Esophagus muscularis mucosa (tissue), 4 donors: ENCODE measurements at regions of chr7 and their contacts with region 1.

Region 1: DNA sequence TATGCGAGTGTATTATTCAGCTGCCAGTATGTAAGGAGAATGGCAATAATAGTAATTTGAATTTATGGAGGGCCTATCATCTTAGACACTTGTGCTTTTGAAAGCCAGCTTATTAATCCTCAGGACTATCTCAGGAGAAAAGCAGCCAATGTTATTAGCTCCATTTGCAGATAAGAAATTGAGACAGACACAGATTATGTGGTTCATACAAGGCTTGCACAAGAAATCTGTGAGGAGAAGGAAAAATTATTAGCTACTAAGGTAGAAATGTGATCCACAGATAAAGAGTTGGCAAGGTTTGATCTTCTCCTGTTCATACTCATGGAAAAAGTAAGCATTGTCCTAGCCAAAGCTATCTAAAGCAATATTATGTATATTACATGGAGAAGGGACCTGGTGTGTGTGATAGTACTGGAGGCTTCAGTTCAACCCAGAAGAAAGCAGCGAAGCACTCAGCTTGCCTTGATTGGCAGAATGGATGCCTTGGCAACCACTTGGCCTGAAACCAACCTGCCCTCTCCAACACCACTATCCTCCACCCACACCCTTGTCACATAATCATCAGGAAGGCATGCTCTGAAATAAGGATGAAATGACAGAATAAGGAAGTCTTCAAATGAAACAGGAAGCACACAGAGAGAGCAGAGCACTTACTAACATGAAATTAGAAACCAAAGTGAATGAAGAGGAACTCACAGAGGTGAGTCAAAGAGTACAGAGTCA is 18.0 kb downstream of the MACC1 start:
- DNase-seq: no peak
- H3K4me3 ChIP-seq: no peak overlapping the region
- H3K27ac ChIP-seq: no peak overlapping the region
- H3K4me1 ChIP-seq: peaks cover 0 to 5% (median 1%) of the 10 kb centered on the region in 4 donors
- H3K27me3 ChIP-seq: no peaks in the 10 kb centered on the region
- CTCF ChIP-seq: no peak
- EP300 ChIP-seq: no peak
- POLR2A ChIP-seq: no peak

Region 2: GRCh38 chr7:20152511-20152910 is 46.7 kb before region 1 on chr7:
- intact Hi-C with region 1: no loop called
- DNase-seq: no peak
- H3K4me3 ChIP-seq: no peak overlapping the region
- H3K27ac ChIP-seq: peak overlapping the region in 3 of 4 donors; percentile 19 to 44 (median 39)
- H3K4me1 ChIP-seq: peaks cover 0 to 25% (median 20%) of the 10 kb centered on the region in 4 donors
- H3K27me3 ChIP-seq: no peaks in the 10 kb centered on the region
- CTCF ChIP-seq: no peak
- EP300 ChIP-seq: no peak
- POLR2A ChIP-seq: no peak

Region 3: DNA sequence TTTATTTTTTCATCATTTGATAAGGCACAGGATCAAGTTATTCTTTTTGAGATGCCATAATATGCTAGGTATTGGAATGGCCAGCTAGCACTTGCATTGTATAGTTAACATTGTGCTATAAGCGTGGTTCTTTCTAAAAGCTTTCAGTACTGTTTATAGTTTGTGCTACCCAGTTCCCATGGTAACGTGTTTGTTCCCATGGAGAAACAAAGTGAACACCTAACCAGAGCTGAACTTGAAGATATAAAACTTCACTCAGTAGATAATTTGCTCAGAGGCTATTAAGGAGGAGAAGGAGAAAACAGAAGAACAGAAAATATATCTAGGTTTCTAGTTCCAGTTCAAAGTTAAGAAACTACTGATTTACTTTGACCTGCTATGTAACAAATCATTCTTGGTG is 107.9 kb after region 1 on chr7:
- intact Hi-C with region 1: no loop called
- DNase-seq: no peak
- H3K4me3 ChIP-seq: no peak overlapping the region
- H3K27ac ChIP-seq: no peak overlapping the region
- H3K4me1 ChIP-seq: peaks cover 0 to 26% (median 12%) of the 10 kb centered on the region in 4 donors
- H3K27me3 ChIP-seq: no peaks in the 10 kb centered on the region
- CTCF ChIP-seq: no peak
- EP300 ChIP-seq: no peak
- POLR2A ChIP-seq: no peak

Region 4: DNA sequence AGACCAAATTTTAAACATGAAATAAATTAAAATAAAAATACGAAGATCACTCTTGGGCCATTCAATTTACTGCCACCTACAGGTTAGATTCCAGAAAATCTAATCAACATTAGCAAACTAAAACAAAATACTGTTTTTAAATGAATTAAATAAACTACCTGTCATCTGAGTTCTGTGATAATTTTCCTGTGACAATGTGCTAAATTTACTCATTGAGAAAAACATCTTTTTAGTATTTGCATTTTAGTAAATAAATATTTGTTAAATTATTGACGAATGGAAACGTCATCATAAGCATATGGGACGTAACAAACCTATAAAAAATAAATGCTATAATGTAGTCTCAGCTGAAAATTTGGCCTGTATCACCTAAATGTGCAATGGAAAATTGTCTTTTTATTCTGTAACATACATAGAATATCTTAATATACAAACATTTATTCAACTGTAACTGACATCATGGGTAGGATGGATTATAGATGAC is 203.6 kb after region 1 on chr7:
- intact Hi-C with region 1: loop called (anchors 5 kb)
- DNase-seq: no peak
- H3K4me3 ChIP-seq: no peak overlapping the region
- H3K27ac ChIP-seq: peak overlapping the region in 2 of 4 donors; percentile 22 to 36
- H3K4me1 ChIP-seq: peaks cover 9 to 39% (median 37%) of the 10 kb centered on the region in 4 donors
- H3K27me3 ChIP-seq: no peaks in the 10 kb centered on the region
- CTCF ChIP-seq: peak; percentile 22 to 47 (median 47)
- EP300 ChIP-seq: no peak
- POLR2A ChIP-seq: no peak